ENCODE measurements at regions of chr17 and their contacts with region 1.

Region 1: DNA sequence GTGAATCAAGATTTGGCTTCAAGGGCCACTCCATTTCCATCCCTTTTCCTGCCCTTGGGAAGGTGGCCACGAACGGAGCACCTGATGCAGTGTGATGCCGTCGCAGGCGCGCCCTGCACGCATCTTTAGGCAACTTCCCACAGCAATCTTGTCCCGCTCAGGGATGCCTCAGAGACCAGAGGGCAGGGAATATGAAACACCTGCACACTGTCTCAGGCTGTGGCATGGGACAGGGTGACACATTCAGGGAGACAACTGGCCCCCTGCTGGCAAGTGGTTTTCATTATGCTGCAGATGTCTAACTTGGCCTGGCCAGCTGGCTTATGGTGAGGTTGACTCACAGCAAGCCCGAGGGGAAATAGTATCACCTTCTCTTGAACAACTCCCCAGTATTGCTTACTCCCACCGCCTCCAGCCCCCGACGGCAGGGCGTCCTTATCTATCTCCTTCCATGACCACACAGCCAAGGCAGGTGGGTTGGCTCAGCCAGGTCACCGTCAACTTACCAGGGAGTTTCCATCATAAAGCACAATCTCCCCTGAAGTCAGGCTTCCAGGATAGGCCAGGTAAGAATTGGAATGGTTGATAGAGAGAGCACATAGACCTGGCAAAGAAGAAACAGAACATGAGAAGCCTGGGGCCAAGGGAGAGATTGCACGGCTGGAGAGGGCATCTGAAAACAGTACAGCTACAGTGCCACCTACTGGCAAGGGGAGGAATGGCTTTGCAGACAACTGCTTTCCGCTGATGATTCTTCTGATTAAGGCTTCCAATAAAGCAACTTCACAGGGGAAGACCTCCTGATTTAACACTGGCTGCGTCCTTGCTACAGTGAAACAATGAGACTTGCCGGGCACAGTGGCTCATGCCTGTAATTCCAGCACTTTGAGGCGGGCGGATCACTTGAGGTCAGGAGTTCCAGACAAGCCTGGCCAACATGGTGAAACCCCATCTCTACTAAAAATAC is 21.1 kb downstream of the WIPI1 start:
- DNase-seq: peak; percentile 71 to 87 (median 77)
- H3K4me3 ChIP-seq: no peak overlapping the region
- H3K4me3 Mint-ChIP-seq: peak overlapping the region; percentile 33 to 85 (median 68)
- H3K27ac ChIP-seq: no peak overlapping the region
- H3K27ac Mint-ChIP-seq: peak overlapping the region; percentile 81 to 98 (median 92)
- H3K4me1 ChIP-seq: peaks cover 35% of the 10 kb centered on the region
- H3K4me1 Mint-ChIP-seq: peaks cover 33 to 60% (median 51%) of the 10 kb centered on the region in 3 donors
- H3K27me3 ChIP-seq: no peaks in the 10 kb centered on the region
- H3K27me3 Mint-ChIP-seq: no peaks in the 10 kb centered on the region

Region 2: DNA sequence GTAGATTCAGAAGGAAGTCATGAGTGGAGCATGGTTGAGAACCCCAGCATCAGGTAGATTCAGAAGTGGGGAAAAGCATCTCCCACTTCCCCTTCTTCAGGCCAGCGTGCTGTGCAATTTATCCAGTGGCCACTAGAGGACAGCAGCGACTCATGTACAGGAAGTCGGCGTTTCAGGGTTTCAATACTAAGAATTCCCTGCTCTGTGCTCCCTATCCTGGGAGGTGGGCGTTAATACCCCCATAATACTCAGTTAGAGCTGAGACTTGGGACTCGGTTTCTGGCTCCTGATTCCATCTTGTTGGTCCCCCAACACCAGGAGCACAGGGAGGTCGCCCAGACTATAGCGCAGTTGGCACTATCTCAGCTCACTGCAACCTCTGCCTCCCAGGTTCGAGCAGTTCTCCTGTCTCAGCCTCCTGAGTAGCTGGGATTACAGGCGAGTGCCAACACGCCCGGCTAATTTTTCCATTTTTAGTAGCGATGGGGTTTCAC is 263.7 kb before region 1 on chr17:
- CTCF ChIA-PET with region 1: interaction called, 12 read pairs
- POLR2A ChIA-PET with region 1: no interaction called
- DNase-seq: peak; percentile 61 to 82 (median 68)
- H3K4me3 ChIP-seq: no peak overlapping the region
- H3K4me3 Mint-ChIP-seq: no peak overlapping the region
- H3K27ac ChIP-seq: no peak overlapping the region
- H3K27ac Mint-ChIP-seq: no peak overlapping the region
- H3K4me1 ChIP-seq: peaks cover 7% of the 10 kb centered on the region
- H3K4me1 Mint-ChIP-seq: peaks cover 11 to 31% (median 19%) of the 10 kb centered on the region in 3 donors
- H3K27me3 ChIP-seq: no peaks in the 10 kb centered on the region
- H3K27me3 Mint-ChIP-seq: no peaks in the 10 kb centered on the region

Region 3: DNA sequence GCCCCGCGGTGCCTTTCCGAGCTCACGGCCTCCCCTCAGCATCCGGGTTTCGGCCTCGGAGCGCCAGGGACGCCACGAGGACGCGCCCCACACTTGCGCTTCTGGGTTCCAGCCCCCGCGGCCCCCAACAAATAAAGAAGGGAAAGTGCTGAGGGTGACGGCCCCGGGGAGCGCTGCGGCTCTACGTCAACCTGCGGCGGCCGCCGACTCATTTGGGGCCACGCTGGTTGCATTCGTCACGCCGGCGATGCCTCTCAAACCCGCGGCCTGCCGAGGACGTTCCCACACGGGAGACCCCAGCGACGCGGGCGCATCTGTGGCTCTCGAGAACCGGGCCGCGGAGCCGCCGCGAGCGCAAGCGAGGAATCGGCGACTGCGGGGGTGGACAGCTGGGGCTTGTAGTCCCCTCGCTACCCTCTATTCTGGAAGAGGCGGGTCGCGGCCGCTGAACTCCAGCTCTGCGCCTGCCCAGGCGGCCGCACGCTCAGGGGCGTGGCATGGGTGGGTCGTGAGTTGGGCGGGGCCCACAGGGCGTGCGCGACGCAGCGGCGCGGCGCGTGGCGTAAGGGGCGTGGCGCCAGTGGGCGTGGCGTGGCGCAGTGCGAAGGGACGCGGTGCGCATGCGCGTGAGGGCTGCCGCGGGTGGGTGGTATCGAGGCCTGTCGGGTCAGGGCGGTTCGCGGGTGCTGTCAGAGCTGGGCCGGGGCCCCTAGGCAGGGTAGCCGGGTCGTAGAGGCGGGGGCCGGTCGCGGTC is 188.5 kb before region 1 on chr17 and contains the start of gene AMZ2:
- CTCF ChIA-PET with region 1: interaction called, 3 read pairs
- POLR2A ChIA-PET with region 1: interaction called, 12 read pairs
- DNase-seq: peak; percentile 95 to 99 (median 98)
- H3K4me3 ChIP-seq: peak within 1 kb of the TSS; percentile 97
- H3K4me3 Mint-ChIP-seq: peak within 1 kb of the TSS; percentile 87 to 98 (median 96)
- H3K27ac ChIP-seq: peak within 1 kb of the TSS; percentile 96
- H3K27ac Mint-ChIP-seq: peak within 1 kb of the TSS; percentile 96 to 100 (median 98)
- H3K4me1 ChIP-seq: peaks cover 34% of the 10 kb centered on the region
- H3K4me1 Mint-ChIP-seq: peaks cover 35 to 63% (median 53%) of the 10 kb centered on the region in 3 donors
- H3K27me3 ChIP-seq: no peaks in the 10 kb centered on the region
- H3K27me3 Mint-ChIP-seq: peaks cover 0 to 8% of the 10 kb centered on the region in 2 donors
- total RNA-seq, gene AMZ2: 113 to 118 TPM

Region 4: GRCh38 chr17:68255731-68256538 is 180.2 kb before region 1 on chr17:
- CTCF ChIA-PET with region 1: interaction called, 59 read pairs
- POLR2A ChIA-PET with region 1: interaction called, 6 read pairs
- DNase-seq: peak in 1 of 5 donors; percentile 58
- H3K4me3 ChIP-seq: peak overlapping the region; percentile 38
- H3K4me3 Mint-ChIP-seq: peak overlapping the region; percentile 60 to 82 (median 70)
- H3K27ac ChIP-seq: peak overlapping the region; percentile 27
- H3K27ac Mint-ChIP-seq: peak overlapping the region; percentile 85 to 99 (median 98)
- H3K4me1 ChIP-seq: peaks cover 84% of the 10 kb centered on the region
- H3K4me1 Mint-ChIP-seq: peaks cover 75 to 92% (median 82%) of the 10 kb centered on the region in 3 donors
- H3K27me3 ChIP-seq: no peaks in the 10 kb centered on the region
- H3K27me3 Mint-ChIP-seq: no peaks in the 10 kb centered on the region

Region 5: DNA sequence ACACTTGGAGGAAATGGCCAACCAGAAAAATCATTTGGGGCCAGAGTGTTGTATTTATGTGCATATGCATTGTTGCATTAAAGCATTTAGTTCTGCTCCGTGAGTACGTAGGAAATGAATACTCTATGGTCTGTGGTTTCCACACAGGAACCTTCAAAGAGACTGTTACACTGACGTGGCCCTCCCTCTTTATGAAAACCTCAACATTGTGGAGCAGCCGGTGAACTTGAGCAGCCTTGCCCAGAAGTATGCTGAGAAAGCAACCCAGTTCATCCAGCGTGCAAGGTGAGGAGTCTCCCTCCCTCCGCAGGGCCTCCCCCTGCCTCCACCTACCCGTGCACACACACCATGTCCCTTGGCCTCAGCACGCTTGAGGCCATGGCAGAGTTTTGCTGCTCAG is 79.6 kb before region 1 on chr17:
- CTCF ChIA-PET with region 1: interaction called, 10 read pairs
- POLR2A ChIA-PET with region 1: interaction called, 3 read pairs
- DNase-seq: peak; percentile 46 to 84 (median 82)
- H3K4me3 ChIP-seq: peak overlapping the region; percentile 5
- H3K4me3 Mint-ChIP-seq: peak overlapping the region; percentile 23 to 82 (median 70)
- H3K27ac ChIP-seq: no peak overlapping the region
- H3K27ac Mint-ChIP-seq: peak overlapping the region; percentile 55 to 96 (median 92)
- H3K4me1 ChIP-seq: peaks cover 60% of the 10 kb centered on the region
- H3K4me1 Mint-ChIP-seq: peaks cover 53 to 68% (median 68%) of the 10 kb centered on the region in 3 donors
- H3K27me3 ChIP-seq: no peaks in the 10 kb centered on the region
- H3K27me3 Mint-ChIP-seq: no peaks in the 10 kb centered on the region

Region 6: GRCh38 chr17:68446626-68447041 is 10.5 kb after region 1 on chr17:
- CTCF ChIA-PET with region 1: interaction called, 12 read pairs
- POLR2A ChIA-PET with region 1: interaction called, 3 read pairs
- DNase-seq: no peak
- H3K4me3 ChIP-seq: no peak overlapping the region
- H3K4me3 Mint-ChIP-seq: no peak overlapping the region
- H3K27ac ChIP-seq: no peak overlapping the region
- H3K27ac Mint-ChIP-seq: peak overlapping the region in 1 of 8 donors; percentile 33
- H3K4me1 ChIP-seq: no peaks in the 10 kb centered on the region
- H3K4me1 Mint-ChIP-seq: peaks cover 0 to 2% (median under 1%) of the 10 kb centered on the region in 3 donors
- H3K27me3 ChIP-seq: no peaks in the 10 kb centered on the region
- H3K27me3 Mint-ChIP-seq: peaks cover 0 to 1% of the 10 kb centered on the region in 2 donors

Region 7: DNA sequence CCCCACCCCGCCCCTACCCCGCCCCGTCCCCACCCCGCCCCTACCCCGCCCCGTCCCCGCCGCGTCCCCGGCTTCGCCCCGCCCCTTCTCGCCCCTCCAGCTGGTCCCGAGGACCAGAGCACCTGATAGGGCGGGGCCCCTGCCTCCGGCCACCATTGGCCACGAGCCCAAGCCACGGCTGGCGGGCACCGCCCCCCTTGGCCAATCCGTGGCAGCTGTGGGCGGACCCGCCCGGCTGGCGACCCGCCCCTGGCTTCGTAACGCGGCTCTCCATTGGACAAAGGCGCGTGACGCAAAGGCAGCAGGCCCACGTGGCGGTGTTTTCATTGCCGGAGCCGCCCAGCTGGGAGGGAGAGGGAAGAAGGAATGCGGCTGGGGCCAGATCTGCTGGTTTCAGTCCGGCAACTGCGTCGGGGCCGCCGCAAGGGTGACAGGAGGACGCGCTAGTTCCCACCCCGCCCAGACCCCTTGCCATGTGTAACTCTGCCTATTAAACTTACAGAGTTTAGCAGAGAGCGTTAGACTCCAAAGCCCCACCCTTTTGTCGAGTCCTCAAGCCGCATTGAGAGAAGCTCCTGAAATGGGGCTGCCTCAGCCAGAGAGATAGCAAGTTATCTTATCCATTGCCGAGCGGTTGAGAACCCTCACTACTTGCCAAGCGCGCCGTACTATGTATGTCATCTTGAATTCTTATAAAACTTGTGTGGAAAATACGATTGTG is 21.5 kb after region 1 on chr17:
- CTCF ChIA-PET with region 1: interaction called, 33 read pairs
- POLR2A ChIA-PET with region 1: interaction called, 12 read pairs
- DNase-seq: peak; percentile 98 to 99 (median 99)
- H3K4me3 ChIP-seq: peak overlapping the region; percentile 69
- H3K4me3 Mint-ChIP-seq: peak overlapping the region; percentile 87 to 91 (median 89)
- H3K27ac ChIP-seq: peak overlapping the region; percentile 64
- H3K27ac Mint-ChIP-seq: peak overlapping the region; percentile 57 to 98 (median 93)
- H3K4me1 ChIP-seq: peaks cover 53% of the 10 kb centered on the region
- H3K4me1 Mint-ChIP-seq: peaks cover 60 to 68% (median 64%) of the 10 kb centered on the region in 3 donors
- H3K27me3 ChIP-seq: no peaks in the 10 kb centered on the region
- H3K27me3 Mint-ChIP-seq: no peaks in the 10 kb centered on the region

Region 8: GRCh38 chr17:68993112-68993511 is 557.0 kb after region 1 on chr17:
- CTCF ChIA-PET with region 1: no interaction called
- POLR2A ChIA-PET with region 1: no interaction called
- DNase-seq: no peak
- H3K4me3 ChIP-seq: no peak overlapping the region
- H3K4me3 Mint-ChIP-seq: no peak overlapping the region
- H3K27ac ChIP-seq: no peak overlapping the region
- H3K27ac Mint-ChIP-seq: no peak overlapping the region
- H3K4me1 ChIP-seq: no peaks in the 10 kb centered on the region
- H3K4me1 Mint-ChIP-seq: no peaks in the 10 kb centered on the region
- H3K27me3 ChIP-seq: no peaks in the 10 kb centered on the region
- H3K27me3 Mint-ChIP-seq: no peaks in the 10 kb centered on the region